ENCODE measurements at regions of chr2 and their contacts with region 1.

Region 1: GRCh38 chr2:25041928-25042320 is at the start of gene EFR3B:
- DNase-seq: peak; percentile 96
- ATAC-seq: peak; percentile 97 to 99 (median 98)
- H3K4me3 ChIP-seq: peak within 1 kb of the TSS; percentile 63 to 93 (median 83)
- H3K27ac ChIP-seq: peak within 1 kb of the TSS; percentile 2 to 95 (median 88)
- H3K4me1 ChIP-seq: peaks cover 8 to 35% (median 23%) of the 10 kb centered on the region in 9 donors
- H3K27me3 ChIP-seq: peaks cover 0 to 47% (median 0%) of the 10 kb centered on the region in 7 donors
- CTCF ChIP-seq: peak in 3 of 9 donors; percentile 4 to 9 (median 8)
- total RNA-seq, gene EFR3B: 2.6 to 15.2 (median 7.9) TPM

Region 2: GRCh38 chr2:24971536-24972314 is 70.2 kb before region 1 on chr2 and contains the start of gene DNAJC27:
- intact Hi-C with region 1: loop called in 4 of 10 experiments (anchors 1 to 5 kb)
- DNase-seq: peak; percentile 98 to 99
- ATAC-seq: peak; percentile 95 to 98 (median 97)
- H3K4me3 ChIP-seq: peak within 1 kb of the TSS; percentile 65 to 93 (median 78)
- H3K27ac ChIP-seq: peak within 1 kb of the TSS; percentile 95 to 100 (median 98)
- H3K4me1 ChIP-seq: peaks cover 0 to 35% (median 11%) of the 10 kb centered on the region in 9 donors
- H3K27me3 ChIP-seq: no peaks in the 10 kb centered on the region
- CTCF ChIP-seq: peak in 1 of 9 donors; percentile 8
- total RNA-seq, gene DNAJC27: 7.2 to 13.1 (median 10.5) TPM

Region 3: DNA sequence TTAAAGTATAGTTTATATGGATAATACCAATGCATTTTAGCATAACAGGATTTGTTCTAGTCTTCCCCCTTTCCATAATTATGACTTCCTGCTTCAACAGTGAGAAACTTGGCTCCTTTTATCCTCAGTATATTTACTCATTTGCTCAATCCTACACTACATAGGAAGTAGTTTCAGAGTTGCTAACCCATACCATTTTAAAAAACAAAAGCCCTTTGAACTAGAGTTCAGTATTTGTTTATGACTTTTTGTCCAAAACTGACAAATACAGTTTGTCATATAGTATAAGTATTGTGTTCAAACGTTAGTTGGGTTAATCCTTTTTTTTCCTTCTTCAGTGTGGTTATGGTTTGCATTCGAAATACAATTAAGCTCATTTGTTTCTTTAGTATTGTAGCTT is 64.3 kb before region 1 on chr2:
- intact Hi-C with region 1: loop called in 5 of 10 experiments (anchors 1 to 5 kb)
- DNase-seq: no peak
- ATAC-seq: no peak
- H3K4me3 ChIP-seq: no peak overlapping the region
- H3K27ac ChIP-seq: no peak overlapping the region
- H3K4me1 ChIP-seq: peaks cover 0 to 24% (median 11%) of the 10 kb centered on the region in 9 donors
- H3K27me3 ChIP-seq: no peaks in the 10 kb centered on the region
- CTCF ChIP-seq: no peak

Region 4: DNA sequence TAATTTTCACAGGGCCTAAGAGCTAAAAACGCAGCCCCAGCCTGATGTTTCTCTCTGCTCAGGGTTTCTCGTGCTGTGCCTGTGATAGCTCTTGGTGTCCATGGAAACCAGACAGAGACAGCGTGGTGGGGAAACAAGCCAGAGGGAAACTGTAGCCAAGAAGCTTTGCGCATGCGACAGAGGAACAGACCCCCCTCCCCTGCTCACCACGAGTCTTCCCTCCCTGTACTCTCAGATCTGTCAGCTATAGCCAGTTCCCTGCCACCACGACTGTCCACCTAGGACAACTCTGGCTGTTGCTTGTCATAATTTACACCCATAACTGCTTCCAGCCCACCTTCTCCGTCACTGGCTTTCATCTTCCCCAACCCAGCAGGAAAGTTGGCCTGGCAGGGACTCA is 57.0 kb before region 1 on chr2:
- intact Hi-C with region 1: loop called in 4 of 10 experiments (anchors 5 kb)
- DNase-seq: peak; percentile 36 to 81
- ATAC-seq: peak; percentile 63 to 97 (median 92)
- H3K4me3 ChIP-seq: no peak overlapping the region
- H3K27ac ChIP-seq: peak overlapping the region in 8 of 10 donors; percentile 15 to 85 (median 65)
- H3K4me1 ChIP-seq: peaks cover 4 to 28% (median 20%) of the 10 kb centered on the region in 9 donors
- H3K27me3 ChIP-seq: no peaks in the 10 kb centered on the region
- CTCF ChIP-seq: no peak

Region 5: GRCh38 chr2:25078171-25079049 is 36.5 kb after region 1 on chr2:
- intact Hi-C with region 1: loop called in 2 of 10 experiments (anchors 1 to 5 kb)
- DNase-seq: peak in 1 of 2 donors; percentile 35
- ATAC-seq: peak; percentile 56 to 91 (median 70)
- H3K4me3 ChIP-seq: peak overlapping the region in 1 of 10 donors; percentile 7
- H3K27ac ChIP-seq: peak overlapping the region in 9 of 10 donors; percentile 47 to 78 (median 64)
- H3K4me1 ChIP-seq: peaks cover 4 to 63% (median 37%) of the 10 kb centered on the region in 9 donors
- H3K27me3 ChIP-seq: no peaks in the 10 kb centered on the region
- CTCF ChIP-seq: no peak

Region 6: DNA sequence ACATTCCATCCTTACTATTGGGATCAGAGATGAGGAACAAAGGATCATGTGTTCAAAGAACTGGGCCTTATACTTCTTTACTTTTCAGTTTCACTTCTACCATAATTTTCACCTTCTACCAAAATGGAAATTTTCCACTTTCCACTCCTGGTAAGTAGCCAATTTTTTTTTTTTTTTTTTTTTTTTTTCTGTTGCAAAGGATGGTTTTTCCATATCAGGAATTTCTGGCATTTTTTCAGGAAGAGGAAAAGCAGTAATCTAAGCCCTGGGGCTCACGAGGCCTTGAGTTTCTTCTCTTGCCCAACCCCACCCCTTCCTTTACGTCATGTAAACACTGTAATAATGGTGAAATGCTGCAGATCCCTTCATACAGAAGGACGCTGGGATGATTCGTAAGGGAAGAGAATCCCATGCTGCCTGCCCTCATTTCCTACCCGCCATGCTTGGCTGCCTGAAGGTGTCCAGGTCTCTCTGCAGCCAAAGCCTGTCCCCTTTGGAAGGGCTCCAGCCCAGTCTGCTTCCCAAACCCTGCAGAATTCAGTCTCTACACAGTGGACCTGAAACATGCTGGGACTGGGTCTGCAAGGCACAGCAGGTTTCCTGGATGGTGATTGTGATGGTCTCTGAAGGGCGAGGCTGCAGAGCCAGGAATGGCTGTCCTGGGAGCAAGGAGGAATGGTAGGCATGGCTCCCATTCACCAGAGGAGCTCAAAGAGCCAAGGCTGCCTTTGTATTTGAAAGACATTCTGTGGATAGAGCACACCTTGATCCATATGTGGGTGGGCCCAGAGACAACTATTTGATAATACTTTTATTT is 57.0 kb after region 1 on chr2:
- intact Hi-C with region 1: loop called in 1 of 10 experiments (anchors 2 kb)
- DNase-seq: peak; percentile 28 to 80
- ATAC-seq: peak; percentile 82 to 99 (median 97)
- H3K4me3 ChIP-seq: no peak overlapping the region
- H3K27ac ChIP-seq: peak overlapping the region; percentile 62 to 92 (median 84)
- H3K4me1 ChIP-seq: peaks cover 0 to 23% (median 15%) of the 10 kb centered on the region in 9 donors
- H3K27me3 ChIP-seq: no peaks in the 10 kb centered on the region
- CTCF ChIP-seq: no peak

Measured in heart right ventricle (tissue), 16 donors.